ENCODE measurements at regions of chr3 and their contacts with region 1.

Region 1: DNA sequence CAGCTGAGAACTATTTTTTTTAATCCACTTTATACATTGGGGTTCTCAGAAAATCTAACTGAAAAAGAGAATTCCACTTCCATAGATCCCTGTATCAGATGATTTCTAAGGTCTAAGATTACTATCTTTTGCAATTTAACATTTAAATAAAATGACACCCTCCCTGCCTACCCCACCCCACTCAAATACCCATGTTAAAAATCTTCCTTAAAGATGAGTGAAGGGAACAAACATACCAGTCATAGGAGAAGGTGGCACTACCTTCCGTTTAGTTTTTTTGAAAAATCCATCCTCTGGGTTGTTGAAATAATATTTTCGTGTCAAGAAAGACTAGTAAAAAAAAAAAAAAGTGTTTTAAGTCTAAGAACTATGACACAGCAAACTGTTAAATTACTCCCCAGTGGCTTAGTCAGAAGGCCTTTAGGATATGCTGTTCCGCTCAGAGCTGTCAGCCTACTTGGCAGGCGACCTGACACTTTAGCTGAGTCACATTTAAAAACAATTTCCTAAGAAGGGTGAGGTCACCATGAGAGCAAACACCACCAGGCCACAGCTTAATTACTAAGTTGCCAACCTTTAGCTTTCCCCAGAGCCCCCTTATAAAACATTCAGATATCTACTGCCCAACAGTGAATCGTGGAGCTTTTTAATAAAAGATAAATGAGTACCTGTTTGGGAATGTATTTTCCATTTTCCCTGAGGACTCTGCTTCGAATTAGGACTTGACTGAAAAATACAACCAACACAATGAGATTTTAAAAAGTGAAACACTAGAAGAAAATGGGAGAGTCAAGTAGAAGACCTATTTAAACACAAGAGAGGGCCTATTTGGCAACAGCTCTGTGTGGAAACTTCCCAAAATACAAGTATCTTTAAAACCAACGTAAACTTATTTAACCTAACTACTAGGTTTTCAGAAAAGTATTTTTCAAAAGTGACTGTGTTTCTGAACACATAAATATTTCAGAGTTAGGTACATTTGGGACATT is 9.6 kb downstream of the EMC3 start:
- DNase-seq: peak; percentile 55
- H3K4me3 ChIP-seq: no peak overlapping the region
- H3K27ac ChIP-seq: peak overlapping the region; percentile 68 to 80 (median 76)
- H3K4me1 ChIP-seq: peaks cover 6 to 18% (median 10%) of the 10 kb centered on the region in 4 donors
- H3K27me3 ChIP-seq: no peaks in the 10 kb centered on the region
- CTCF ChIP-seq: no peak
- EP300 ChIP-seq: no peak
- POLR2A ChIP-seq: no peak

Region 2: GRCh38 chr3:10248184-10249080 is 271.4 kb after region 1 on chr3 and contains the start of gene TATDN2:
- in situ Hi-C with region 1: loop called in 2 of 4 experiments (anchors 25 kb)
- intact Hi-C with region 1: no loop called
- DNase-seq: peak; percentile 99
- H3K4me3 ChIP-seq: peak within 1 kb of the TSS; percentile 75 to 95 (median 80)
- H3K27ac ChIP-seq: peak within 1 kb of the TSS; percentile 91 to 94 (median 92)
- H3K4me1 ChIP-seq: peaks cover 18 to 35% (median 23%) of the 10 kb centered on the region in 4 donors
- H3K27me3 ChIP-seq: no peaks in the 10 kb centered on the region
- CTCF ChIP-seq: no peak
- EP300 ChIP-seq: no peak
- POLR2A ChIP-seq: peak; percentile 78
- total RNA-seq, gene TATDN2: 22.7 to 59.7 (median 28.2) TPM

Measured in transverse colon (tissue), 4 donors.